ENCODE measurements at regions of chr10 and their contacts with region 1.

Region 1: GRCh38 chr10:60125895-60126294 is 219.5 kb upstream of the CCDC6 start:
- DNase-seq: no peak
- ATAC-seq: no peak
- H3K4me3 ChIP-seq: no peak overlapping the region
- H3K4me3 Mint-ChIP-seq: no peak overlapping the region
- H3K27ac ChIP-seq: no peak overlapping the region
- H3K27ac Mint-ChIP-seq: no peak overlapping the region
- H3K4me1 ChIP-seq: no peaks in the 10 kb centered on the region
- H3K4me1 Mint-ChIP-seq: no peaks in the 10 kb centered on the region
- H3K27me3 ChIP-seq: no peaks in the 10 kb centered on the region
- H3K27me3 Mint-ChIP-seq: no peaks in the 10 kb centered on the region
- CTCF ChIP-seq: no peak

Region 2: DNA sequence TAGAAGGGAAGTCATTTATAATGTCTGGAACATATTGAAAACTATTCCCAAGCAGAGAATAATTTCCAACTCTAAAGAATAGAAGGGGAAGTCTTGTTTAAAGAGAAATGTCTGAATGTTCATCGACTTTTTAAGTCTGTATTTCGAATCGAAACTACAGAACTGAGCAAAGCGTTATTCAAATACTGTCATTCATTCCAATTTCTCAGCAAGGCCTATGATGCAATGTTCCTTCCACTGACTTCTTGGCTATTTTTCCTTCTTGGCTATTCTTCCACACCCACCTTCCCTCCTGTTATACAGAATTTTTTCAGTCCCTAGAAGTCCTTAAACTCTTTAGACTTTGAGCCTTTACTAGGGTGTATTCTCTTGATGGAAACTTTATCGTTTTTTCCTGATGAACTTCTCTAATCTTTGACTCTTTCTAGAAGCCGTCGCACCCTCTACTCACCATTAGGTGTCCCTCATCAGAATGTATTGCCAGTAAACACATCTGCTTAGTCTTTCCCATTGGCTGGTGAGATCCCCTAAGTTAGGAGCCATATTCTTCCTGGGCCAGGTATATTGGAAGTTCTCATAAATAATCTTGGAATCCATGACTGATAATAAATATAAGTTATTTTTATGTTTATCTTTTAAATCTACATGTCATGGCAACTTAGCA is 16.1 kb after region 1 on chr10:
- CTCF ChIA-PET with region 1: no interaction called
- POLR2A ChIA-PET with region 1: no interaction called
- intact Hi-C with region 1: loop called in 1 of 2 experiments (anchors 2 kb)
- DNase-seq: no peak
- ATAC-seq: no peak
- H3K4me3 ChIP-seq: no peak overlapping the region
- H3K4me3 Mint-ChIP-seq: no peak overlapping the region
- H3K27ac ChIP-seq: no peak overlapping the region
- H3K27ac Mint-ChIP-seq: no peak overlapping the region
- H3K4me1 ChIP-seq: no peaks in the 10 kb centered on the region
- H3K4me1 Mint-ChIP-seq: no peaks in the 10 kb centered on the region
- H3K27me3 ChIP-seq: no peaks in the 10 kb centered on the region
- H3K27me3 Mint-ChIP-seq: no peaks in the 10 kb centered on the region
- CTCF ChIP-seq: no peak

Measured in CD4-positive, alpha-beta T cell (primary cell).